Head of caudate nucleus (tissue), 42 donors: ENCODE measurements at regions of chr10 and their contacts with region 1.

Region 1: GRCh38 chr10:104121520-104122224 is at the start of gene SFR1:
- DNase-seq: peak; percentile 97 to 100 (median 99)

Region 2: DNA sequence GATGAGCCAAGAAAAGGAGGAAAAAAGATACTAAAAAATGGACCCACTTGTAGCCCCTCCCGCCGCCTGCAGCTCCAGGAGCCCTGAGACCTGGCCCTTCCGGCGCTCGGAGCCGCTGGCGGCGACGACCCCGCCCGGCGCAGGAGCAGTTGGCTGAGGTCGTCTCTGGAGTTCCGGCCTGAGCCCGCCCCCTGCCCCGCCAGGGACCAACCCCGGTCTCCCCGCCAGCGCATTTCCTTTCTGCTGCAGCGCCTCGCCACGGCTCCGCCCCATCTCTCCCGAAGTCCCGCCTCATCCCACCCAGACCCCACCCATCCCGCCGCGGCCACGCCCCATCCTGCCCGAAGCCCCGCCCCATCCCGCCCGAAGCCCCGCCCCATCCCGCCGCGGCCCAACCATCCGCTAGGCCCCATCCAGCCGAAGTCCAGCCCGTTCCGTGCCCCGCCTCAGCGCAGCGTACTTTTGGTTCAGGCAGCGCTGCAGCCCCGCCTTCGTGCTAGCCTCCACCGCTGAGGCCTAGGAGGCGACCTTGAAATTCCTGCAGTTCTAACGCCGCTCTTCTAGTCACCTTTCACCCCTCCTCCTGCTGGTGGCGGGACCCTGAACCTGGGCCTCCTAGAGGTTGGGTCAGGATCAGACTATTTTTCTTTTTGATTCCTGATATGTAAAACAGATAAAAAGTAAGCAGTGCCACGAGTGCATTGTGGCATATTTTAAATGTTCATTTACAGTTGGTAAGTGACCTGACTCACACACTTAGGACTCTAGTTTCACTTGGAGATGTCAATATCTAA is 203.4 kb before region 1 on chr10 and contains the start of gene STN1:
- intact Hi-C with region 1: loop called (anchors 10 kb)
- DNase-seq: peak; percentile 92 to 100 (median 98)

Region 3: GRCh38 chr10:103966671-103967447 is 154.8 kb before region 1 on chr10 and contains the start of gene SLK:
- intact Hi-C with region 1: loop called (anchors 5 kb)
- DNase-seq: peak; percentile 46 to 92 (median 84)

Region 4: DNA sequence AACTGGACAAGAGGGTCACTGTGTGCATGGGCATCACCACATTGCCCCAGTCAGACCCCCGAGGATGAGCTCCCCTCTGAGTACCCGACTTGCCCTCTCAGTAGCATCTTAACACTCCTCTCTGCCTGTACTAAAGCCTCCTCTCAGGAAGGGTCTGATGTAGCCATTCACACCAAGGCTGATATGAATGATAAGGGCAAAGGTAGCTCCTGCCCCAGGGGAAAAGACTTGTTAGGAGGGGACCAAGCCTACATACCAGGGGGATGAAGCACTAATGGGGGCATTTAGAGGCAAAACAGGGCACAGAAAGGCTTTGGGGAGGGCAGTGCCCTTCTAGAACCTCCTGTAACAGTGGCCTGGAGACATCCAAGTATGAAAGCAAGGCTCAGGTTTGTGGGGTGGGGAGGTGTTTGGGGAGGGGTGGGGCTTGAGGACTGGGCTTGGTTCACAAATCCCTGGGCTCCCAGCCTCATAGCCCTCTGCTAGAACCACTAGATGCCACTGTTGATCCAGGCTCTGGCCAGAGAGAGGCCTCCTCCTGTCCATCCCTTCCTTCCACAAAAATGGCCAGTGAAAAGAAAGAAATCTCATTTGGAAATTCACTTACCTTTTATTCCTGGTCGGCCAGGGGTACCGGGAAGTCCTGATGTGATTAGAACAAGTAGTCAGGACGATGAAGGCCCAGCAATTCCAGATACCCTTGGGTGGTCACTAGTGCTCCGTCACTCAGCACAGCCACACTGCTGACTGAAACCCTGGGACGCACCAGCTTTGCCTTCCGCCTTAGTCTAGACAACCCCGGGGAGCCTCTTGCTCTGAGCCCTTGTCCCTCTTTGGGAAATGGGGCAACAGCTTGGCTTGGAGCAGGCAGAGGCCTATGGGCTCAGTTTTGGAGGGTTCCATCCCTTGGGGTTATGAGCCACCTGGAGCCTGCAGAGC is 76.3 kb before region 1 on chr10:
- intact Hi-C with region 1: loop called (anchors 5 kb)
- DNase-seq: peak; percentile 23 to 89 (median 74)

Region 5: DNA sequence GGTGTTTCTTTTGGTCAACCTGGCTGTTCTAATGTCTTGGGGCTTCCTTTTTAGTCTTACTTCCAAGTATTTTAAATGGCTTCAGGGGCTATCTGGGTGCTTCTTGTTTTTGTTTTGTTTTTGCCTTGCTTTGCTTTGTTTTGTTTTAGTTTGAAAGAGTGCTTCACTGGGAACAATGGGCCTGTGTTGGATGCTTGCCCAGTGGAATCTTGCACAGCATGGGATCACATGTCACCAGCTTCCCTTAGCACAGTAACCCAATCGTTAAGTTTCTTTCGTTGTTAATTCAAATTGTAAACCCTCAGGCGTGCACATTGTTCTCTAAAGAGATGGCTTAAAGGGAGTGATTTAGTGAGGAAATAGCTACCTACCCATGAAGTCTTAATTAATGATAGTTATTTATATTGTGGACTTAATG is 44.9 kb before region 1 on chr10:
- intact Hi-C with region 1: loop called (anchors 5 kb)
- DNase-seq: peak; percentile 16 to 90 (median 70)

Region 6: DNA sequence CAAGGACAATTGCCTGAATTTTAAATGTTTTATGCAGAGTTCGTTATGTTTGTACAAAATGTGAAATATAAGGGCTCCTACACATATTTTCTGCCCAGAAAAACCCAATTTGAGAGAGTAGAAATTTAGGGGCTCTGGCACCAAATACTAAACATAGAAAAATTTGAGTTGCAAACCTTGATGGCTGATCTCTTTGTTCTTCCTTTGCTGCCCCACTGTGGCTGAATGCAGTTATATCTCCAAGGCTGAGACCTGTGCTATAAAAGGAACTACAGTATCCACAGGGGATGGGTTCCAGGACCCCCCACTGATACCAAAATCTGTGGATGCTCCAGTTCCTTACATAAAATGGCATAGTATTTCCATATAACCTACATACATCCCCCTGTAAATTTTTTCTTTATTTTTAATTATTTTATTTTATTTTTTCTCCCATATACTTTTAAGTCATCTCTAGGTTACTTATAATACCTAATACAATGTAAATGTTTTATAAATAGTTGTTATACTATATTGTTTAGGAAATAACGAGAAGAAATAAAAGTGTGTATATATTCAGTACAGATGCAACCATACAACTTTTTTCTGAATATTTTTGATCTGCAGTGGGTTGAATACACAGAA is 88.0 kb after region 1 on chr10:
- intact Hi-C with region 1: loop called (anchors 10 kb)
- DNase-seq: peak in 41 of 42 donors; percentile 22 to 87 (median 66)